Cardiac septum (tissue), 1 donor: ENCODE measurements at regions of chr18 and their contacts with region 1.

Region 1: GRCh38 chr18:78056011-78056410 is 806.4 kb downstream of the GALR1 start:
- DNase-seq: no peak

Region 2: DNA sequence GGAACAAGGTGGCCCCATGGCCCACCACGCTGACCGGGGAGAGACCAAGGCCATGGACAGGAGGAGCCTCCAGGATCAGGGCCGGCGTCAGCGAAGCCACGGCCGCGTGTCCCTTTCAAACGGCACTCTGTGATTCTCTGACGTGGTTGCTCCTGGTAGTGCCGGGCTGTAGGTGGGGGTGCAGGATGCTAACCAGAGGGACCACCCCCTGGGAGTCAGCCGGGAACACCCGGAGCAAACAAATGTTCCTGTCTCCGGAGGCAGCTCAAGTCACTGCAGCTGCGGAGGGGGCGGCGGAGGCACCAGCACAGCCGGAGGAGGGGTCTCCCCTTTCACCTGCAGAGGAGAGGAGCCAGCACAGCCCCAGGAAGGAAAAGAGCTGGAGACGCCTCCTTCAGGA is 173.0 kb after region 1 on chr18:
- intact Hi-C with region 1: loop called (anchors 10 kb)
- DNase-seq: no peak